ENCODE measurements at regions of chr11 and their contacts with region 1.

Region 1: GRCh38 chr11:11621573-11622319 is at the start of gene GALNT18:
- DNase-seq: peak; percentile 95
- H3K4me3 Mint-ChIP-seq: peak within 1 kb of the TSS; percentile 90
- H3K27ac Mint-ChIP-seq: peak within 1 kb of the TSS; percentile 51
- H3K4me1 Mint-ChIP-seq: peaks cover 34% of the 10 kb centered on the region
- H3K27me3 Mint-ChIP-seq: no peaks in the 10 kb centered on the region
- CTCF ChIP-seq: peak; percentile 29
- total RNA-seq, gene GALNT18: 9.0 and 14.1 TPM in 2 replicates

Region 2: GRCh38 chr11:11555208-11555607 is 66.5 kb before region 1 on chr11:
- CTCF ChIA-PET with region 1: interaction called, 3 read pairs
- POLR2A ChIA-PET with region 1: interaction called, 18 read pairs
- intact Hi-C with region 1: loop called (anchors 1 kb)
- DNase-seq: no peak
- H3K4me3 Mint-ChIP-seq: no peak overlapping the region
- H3K27ac Mint-ChIP-seq: no peak overlapping the region
- H3K4me1 Mint-ChIP-seq: peaks cover 8% of the 10 kb centered on the region
- H3K27me3 Mint-ChIP-seq: no peaks in the 10 kb centered on the region
- CTCF ChIP-seq: no peak

Region 3: DNA sequence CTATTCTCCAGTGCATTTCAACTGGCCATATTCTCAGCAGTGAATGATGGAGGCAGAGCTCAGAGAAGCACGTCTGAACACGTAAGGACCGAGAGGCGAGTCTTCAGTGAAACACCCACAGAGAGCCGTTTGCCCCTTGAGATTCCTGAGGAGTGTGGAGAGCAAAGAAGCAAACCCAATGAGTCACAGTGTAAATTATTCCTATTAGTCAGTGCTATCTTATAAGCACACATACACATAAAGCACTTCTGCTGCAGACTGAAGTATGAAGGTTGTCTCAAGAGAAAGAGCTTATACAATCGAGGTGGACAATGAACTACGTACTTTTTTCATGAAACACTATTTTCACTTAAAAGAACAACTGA is 37.3 kb before region 1 on chr11:
- CTCF ChIA-PET with region 1: interaction called, 5 read pairs
- POLR2A ChIA-PET with region 1: interaction called, 48 read pairs
- intact Hi-C with region 1: no loop called
- DNase-seq: peak; percentile 87
- H3K4me3 Mint-ChIP-seq: peak overlapping the region; percentile 20
- H3K27ac Mint-ChIP-seq: peak overlapping the region; percentile 1
- H3K4me1 Mint-ChIP-seq: peaks cover 40% of the 10 kb centered on the region
- H3K27me3 Mint-ChIP-seq: no peaks in the 10 kb centered on the region
- CTCF ChIP-seq: no peak

Region 4: GRCh38 chr11:11717064-11717725 is 95.4 kb after region 1 on chr11:
- CTCF ChIA-PET with region 1: no interaction called
- POLR2A ChIA-PET with region 1: interaction called, 22 read pairs
- intact Hi-C with region 1: no loop called
- DNase-seq: peak; percentile 97
- H3K4me3 Mint-ChIP-seq: peak overlapping the region; percentile 63
- H3K27ac Mint-ChIP-seq: peak overlapping the region; percentile 89
- H3K4me1 Mint-ChIP-seq: peaks cover 12% of the 10 kb centered on the region
- H3K27me3 Mint-ChIP-seq: no peaks in the 10 kb centered on the region
- CTCF ChIP-seq: no peak

Region 5: GRCh38 chr11:11787305-11788062 is 165.7 kb after region 1 on chr11:
- CTCF ChIA-PET with region 1: interaction called, 14 read pairs
- POLR2A ChIA-PET with region 1: interaction called, 21 read pairs
- intact Hi-C with region 1: loop called (anchors 2 kb)
- DNase-seq: peak; percentile 81
- H3K4me3 Mint-ChIP-seq: no peak overlapping the region
- H3K27ac Mint-ChIP-seq: no peak overlapping the region
- H3K4me1 Mint-ChIP-seq: peaks cover 26% of the 10 kb centered on the region
- H3K27me3 Mint-ChIP-seq: no peaks in the 10 kb centered on the region
- CTCF ChIP-seq: peak; percentile 87